ENCODE measurements at regions of chr6 and their contacts with region 1.

Region 1: DNA sequence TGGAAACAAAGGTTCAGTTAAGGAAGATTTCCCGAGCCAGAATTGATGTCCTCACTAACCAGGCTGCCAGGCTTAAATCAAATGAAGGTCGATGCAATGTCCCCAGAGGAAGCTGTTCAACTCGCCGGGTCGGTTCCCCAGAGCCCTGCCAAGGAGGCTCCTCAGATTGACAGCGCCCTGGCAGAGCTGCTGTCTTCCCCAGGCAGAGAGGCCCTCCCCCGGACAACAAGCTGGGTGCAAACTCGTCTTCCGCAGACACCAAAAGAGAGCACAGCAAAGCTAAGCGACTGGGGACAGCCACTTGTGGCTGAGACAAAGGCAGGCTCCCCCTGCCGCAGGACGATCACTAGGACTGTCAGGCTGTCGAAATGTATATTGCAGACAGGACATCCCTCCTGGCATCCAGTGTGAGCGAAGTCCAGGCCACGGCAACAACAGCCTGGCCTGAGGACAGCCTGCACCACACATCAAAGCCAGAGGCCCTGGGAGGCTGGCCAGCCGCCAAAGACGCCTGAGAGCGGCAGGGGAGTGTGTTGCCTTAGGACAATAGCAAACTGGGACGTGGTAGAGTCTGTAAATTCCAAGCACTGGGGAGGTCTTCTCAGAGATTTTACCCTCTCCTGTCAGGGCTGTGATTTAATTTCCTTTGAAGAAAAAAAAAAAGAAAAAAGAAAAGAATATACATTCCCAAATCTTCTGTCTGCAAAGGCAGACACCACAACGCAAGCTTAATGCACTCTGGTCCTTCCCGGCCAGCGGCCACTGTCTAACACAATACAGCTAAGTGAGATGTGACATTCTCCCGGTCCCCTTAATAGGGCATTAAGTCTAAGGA is 99.1 kb downstream of the HIVEP2 start:
- DNase-seq: peak; percentile 27 to 70 (median 63)
- ATAC-seq: peak; percentile 72
- H3K4me3 ChIP-seq: peak overlapping the region; percentile 44
- H3K4me3 Mint-ChIP-seq: peak overlapping the region; percentile 84 to 93 (median 86)
- H3K27ac ChIP-seq: peak overlapping the region; percentile 84
- H3K27ac Mint-ChIP-seq: peak overlapping the region; percentile 91 to 100 (median 95)
- H3K4me1 ChIP-seq: peaks cover 69 to 74% of the 10 kb centered on the region in 2 donors
- H3K4me1 Mint-ChIP-seq: peaks cover 49 to 99% (median 86%) of the 10 kb centered on the region in 7 donors
- H3K27me3 ChIP-seq: no peaks in the 10 kb centered on the region
- H3K27me3 Mint-ChIP-seq: no peaks in the 10 kb centered on the region

Region 2: GRCh38 chr6:142784344-142784743 is 61.5 kb before region 1 on chr6:
- CTCF ChIA-PET with region 1: no interaction called
- POLR2A ChIA-PET with region 1: interaction called, 6 read pairs
- intact Hi-C with region 1: loop called in 1 of 2 experiments (anchors 2 kb)
- DNase-seq: peak in 6 of 9 donors; percentile 8 to 30 (median 23)
- ATAC-seq: peak; percentile 61
- H3K4me3 ChIP-seq: no peak overlapping the region
- H3K4me3 Mint-ChIP-seq: peak overlapping the region in 8 of 10 donors; percentile 0 to 53 (median 36)
- H3K27ac ChIP-seq: peak overlapping the region; percentile 54
- H3K27ac Mint-ChIP-seq: peak overlapping the region in 8 of 9 donors; percentile 17 to 86 (median 55)
- H3K4me1 ChIP-seq: peaks cover 0 to 17% of the 10 kb centered on the region in 2 donors
- H3K4me1 Mint-ChIP-seq: peaks cover 21 to 83% (median 79%) of the 10 kb centered on the region in 7 donors
- H3K27me3 ChIP-seq: no peaks in the 10 kb centered on the region
- H3K27me3 Mint-ChIP-seq: no peaks in the 10 kb centered on the region

Region 3: DNA sequence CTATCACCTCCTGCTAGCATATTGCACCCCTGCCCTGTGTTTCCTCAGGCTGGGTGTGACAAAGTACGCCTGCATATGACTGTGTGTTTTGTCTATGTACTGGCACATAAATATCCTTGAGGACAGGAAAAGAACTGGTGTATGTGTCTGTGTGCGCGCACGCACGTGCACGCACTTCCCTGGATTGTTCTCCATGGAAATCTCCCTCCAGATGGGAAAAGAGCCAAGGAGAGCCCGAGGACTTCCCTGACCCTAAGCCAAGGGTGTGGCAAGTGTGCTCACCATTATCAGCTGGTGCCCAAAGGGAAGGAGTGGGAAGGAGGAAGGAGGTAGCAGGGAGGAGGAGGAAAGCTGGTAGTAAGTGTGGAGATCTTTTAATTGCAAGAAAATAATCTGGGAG is 18.5 kb before region 1 on chr6:
- CTCF ChIA-PET with region 1: no interaction called
- POLR2A ChIA-PET with region 1: interaction called, 71 read pairs
- intact Hi-C with region 1: no loop called
- DNase-seq: no peak
- ATAC-seq: no peak
- H3K4me3 ChIP-seq: no peak overlapping the region
- H3K4me3 Mint-ChIP-seq: no peak overlapping the region
- H3K27ac ChIP-seq: no peak overlapping the region
- H3K27ac Mint-ChIP-seq: peak overlapping the region in 7 of 9 donors; percentile 32 to 85 (median 75)
- H3K4me1 ChIP-seq: peaks cover 8 to 18% of the 10 kb centered on the region in 2 donors
- H3K4me1 Mint-ChIP-seq: peaks cover 33 to 90% (median 82%) of the 10 kb centered on the region in 7 donors
- H3K27me3 ChIP-seq: no peaks in the 10 kb centered on the region
- H3K27me3 Mint-ChIP-seq: no peaks in the 10 kb centered on the region

Region 4: DNA sequence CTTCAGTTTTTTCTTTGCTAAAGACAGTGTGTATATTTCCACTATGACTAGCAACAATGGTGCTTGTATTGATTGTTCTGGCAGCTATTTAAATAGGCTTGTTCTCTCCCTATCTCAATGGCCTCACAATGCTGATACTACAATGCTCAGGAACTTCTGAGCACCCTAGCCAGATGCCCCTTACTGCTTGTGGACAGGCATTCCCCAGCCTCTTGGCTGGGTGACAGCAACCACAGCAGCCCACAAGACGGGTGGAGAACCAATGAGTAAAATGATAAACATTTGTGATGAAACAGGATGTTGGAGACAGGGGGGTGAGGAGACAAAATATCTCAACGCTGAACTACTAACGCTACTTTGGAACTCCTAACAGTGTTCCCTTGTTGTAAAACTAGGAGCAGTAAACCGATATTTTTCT is 56.8 kb after region 1 on chr6:
- CTCF ChIA-PET with region 1: interaction called, 3 read pairs
- POLR2A ChIA-PET with region 1: interaction called, 37 read pairs
- intact Hi-C with region 1: loop called in 1 of 2 experiments (anchors 1 kb)
- DNase-seq: peak; percentile 60 to 89 (median 84)
- ATAC-seq: peak; percentile 84
- H3K4me3 ChIP-seq: peak overlapping the region; percentile 26
- H3K4me3 Mint-ChIP-seq: peak overlapping the region in 7 of 10 donors; percentile 77 to 88 (median 83)
- H3K27ac ChIP-seq: peak overlapping the region; percentile 88
- H3K27ac Mint-ChIP-seq: peak overlapping the region in 1 of 9 donors; percentile 95
- H3K4me1 ChIP-seq: peaks cover 48 to 71% of the 10 kb centered on the region in 2 donors
- H3K4me1 Mint-ChIP-seq: peaks cover 13 to 64% (median 41%) of the 10 kb centered on the region in 7 donors
- H3K27me3 ChIP-seq: no peaks in the 10 kb centered on the region
- H3K27me3 Mint-ChIP-seq: no peaks in the 10 kb centered on the region

Region 5: DNA sequence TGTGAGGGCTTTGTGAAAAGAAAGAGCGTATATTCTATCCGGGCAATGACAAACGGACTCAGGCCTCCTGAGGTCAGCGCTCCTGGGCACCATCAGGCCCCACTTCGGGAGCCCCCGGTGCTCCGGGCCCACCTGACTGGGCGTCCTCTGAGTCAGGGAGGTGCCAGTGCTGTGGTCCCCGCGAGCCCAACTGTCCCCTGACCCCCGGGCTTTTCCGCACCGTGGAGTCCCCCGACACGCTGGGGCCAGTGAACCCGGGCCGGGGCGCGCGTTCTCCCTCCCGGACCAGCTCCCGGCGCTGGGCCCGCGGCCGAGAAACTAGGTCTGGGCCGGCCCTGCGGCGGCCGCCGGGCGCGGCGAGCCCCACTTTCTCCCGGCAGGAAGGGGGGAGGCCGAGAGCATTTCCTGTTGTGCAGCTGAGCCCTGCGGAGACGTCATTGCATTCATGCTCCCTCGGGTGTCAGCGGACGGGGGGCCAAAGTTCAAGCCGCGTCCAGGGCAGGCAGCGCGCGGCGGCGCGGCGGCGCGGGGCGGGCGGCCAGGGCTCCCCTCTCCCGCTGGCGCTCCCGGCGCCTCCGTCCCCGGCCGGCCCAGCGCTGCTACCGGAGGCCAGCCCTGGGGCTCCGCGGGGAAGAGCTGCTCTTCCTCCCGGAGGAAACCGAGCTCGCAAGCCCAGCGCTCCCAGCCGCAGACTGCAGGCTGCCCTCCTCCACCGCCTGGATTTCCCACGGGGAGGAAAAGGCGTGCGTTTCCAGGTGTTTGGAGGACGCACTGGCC is 80.8 kb after region 1 on chr6:
- CTCF ChIA-PET with region 1: interaction called, 3 read pairs
- POLR2A ChIA-PET with region 1: interaction called, 49 read pairs
- intact Hi-C with region 1: loop called in 1 of 2 experiments (anchors 1 kb)
- DNase-seq: peak; percentile 62 to 87 (median 84)
- ATAC-seq: peak; percentile 88
- H3K4me3 ChIP-seq: peak overlapping the region; percentile 87
- H3K4me3 Mint-ChIP-seq: peak overlapping the region; percentile 88 to 99 (median 96)
- H3K27ac ChIP-seq: peak overlapping the region; percentile 100
- H3K27ac Mint-ChIP-seq: peak overlapping the region; percentile 93 to 100 (median 100)
- H3K4me1 ChIP-seq: peaks cover 35 to 40% of the 10 kb centered on the region in 2 donors
- H3K4me1 Mint-ChIP-seq: peaks cover 20 to 75% (median 68%) of the 10 kb centered on the region in 7 donors
- H3K27me3 ChIP-seq: no peaks in the 10 kb centered on the region
- H3K27me3 Mint-ChIP-seq: no peaks in the 10 kb centered on the region

Region 6: DNA sequence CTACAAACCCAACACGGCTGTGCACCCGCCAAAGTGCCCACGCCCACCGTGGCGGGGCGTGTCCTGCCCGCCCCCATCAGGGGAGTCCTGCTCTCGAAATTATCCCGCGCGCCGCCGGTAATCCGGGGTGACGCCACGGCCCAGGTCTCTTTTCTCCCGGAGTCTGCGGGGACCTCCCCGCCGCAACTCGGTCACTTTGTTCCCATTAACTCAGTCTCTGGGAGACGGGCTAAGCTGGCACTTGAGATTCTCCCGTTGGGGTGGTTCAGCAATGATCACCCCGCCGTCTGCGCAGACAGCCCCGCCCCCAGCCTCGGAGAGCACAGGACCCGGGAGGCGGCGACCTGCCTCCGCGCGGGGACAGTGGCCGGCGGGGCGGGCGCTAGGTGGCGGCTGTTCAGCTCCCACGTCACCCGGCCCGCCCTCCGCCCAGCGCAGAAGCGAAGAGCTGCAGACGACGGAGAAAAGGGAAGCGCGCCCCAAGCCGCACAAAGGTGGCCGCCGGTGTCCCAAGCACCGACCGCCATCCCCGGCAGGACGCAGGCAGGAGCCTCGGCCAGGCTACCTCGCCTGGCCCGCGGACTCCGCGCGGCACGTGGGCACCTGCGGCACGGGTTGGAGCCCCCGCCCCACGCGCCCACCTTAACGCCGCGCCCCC is 1218.0 kb after region 1 on chr6:
- CTCF ChIA-PET with region 1: no interaction called
- POLR2A ChIA-PET with region 1: no interaction called
- intact Hi-C with region 1: loop called in 1 of 2 experiments (anchors 10 kb)
- DNase-seq: peak; percentile 84 to 91 (median 88)
- ATAC-seq: peak; percentile 96
- H3K4me3 ChIP-seq: peak overlapping the region; percentile 56
- H3K4me3 Mint-ChIP-seq: peak overlapping the region; percentile 87 to 94 (median 91)
- H3K27ac ChIP-seq: peak overlapping the region; percentile 85
- H3K27ac Mint-ChIP-seq: peak overlapping the region; percentile 83 to 97 (median 88)
- H3K4me1 ChIP-seq: peaks cover 0 to 12% of the 10 kb centered on the region in 2 donors
- H3K4me1 Mint-ChIP-seq: peaks cover 17 to 44% (median 29%) of the 10 kb centered on the region in 7 donors
- H3K27me3 ChIP-seq: no peaks in the 10 kb centered on the region
- H3K27me3 Mint-ChIP-seq: peaks cover 0 to 2% (median 0%) of the 10 kb centered on the region in 5 donors

Measured in naive thymus-derived CD4-positive, alpha-beta T cell (primary cell).